Caco-2 (cell line): ENCODE measurements at regions of chr13 and their contacts with region 1.

Region 1: DNA sequence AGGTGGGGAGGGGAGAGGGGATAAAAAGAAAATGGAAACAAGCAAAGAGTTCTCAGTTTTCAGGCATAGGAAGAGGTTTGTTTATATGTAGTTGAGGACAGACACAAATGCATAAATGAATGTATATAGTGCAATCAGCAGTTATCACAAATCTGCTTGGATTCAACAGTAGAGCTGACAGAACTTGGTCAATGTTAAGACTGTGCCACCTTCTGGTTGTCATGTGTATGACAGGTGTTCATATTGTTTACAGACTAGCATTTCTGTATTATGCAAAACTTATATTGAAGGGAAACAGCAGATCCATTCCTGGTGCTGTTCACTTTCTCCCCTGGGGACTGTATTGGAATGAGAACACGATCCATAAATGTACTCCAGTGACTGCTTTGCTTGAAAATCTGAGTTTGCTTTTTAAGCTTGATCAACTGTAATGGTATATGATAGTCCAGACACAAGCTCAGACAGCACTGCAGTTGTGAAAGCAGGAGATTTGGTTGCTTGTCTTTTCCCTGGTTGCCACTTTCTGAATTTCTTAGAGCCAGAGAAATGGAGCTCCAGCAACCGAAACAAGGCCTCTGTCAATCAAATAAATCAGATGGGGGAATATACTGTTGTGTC is 319.5 kb upstream of the OBI1 start:
- DNase-seq: peak; percentile 47 to 65
- H3K4me3 ChIP-seq: no peak overlapping the region
- H3K4me3 Mint-ChIP-seq: no peak overlapping the region
- H3K27ac Mint-ChIP-seq: no peak overlapping the region
- H3K4me1 ChIP-seq: no peaks in the 10 kb centered on the region
- H3K4me1 Mint-ChIP-seq: no peaks in the 10 kb centered on the region
- H3K27me3 ChIP-seq: no peaks in the 10 kb centered on the region
- H3K27me3 Mint-ChIP-seq: peaks cover 5% of the 10 kb centered on the region
- CTCF ChIP-seq: peak; percentile 74 to 77

Region 2: DNA sequence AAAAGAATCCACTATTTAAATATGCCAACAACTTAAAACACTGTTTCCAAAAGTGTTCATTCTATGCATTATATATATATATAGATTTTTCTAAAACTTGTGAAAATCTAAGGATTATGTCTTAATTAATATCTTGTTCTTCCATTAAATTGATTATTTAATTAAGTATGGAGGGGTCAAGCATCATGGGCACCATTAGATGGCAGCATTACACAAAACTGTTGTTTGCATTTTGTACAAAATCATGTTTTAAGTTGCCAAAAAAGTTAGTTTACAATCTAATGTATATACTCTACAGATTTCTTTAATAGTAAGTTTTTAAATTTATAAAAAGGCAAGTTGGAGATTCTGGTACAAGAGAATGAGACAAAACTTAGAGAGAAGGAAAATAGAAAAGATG is 846.7 kb before region 1 on chr13:
- CTCF ChIA-PET with region 1: interaction called, 17 read pairs
- POLR2A ChIA-PET with region 1: no interaction called
- intact Hi-C with region 1: loop called (anchors 1 kb)
- DNase-seq: no peak
- H3K4me3 ChIP-seq: no peak overlapping the region
- H3K4me3 Mint-ChIP-seq: no peak overlapping the region
- H3K27ac Mint-ChIP-seq: no peak overlapping the region
- H3K4me1 ChIP-seq: no peaks in the 10 kb centered on the region
- H3K4me1 Mint-ChIP-seq: no peaks in the 10 kb centered on the region
- H3K27me3 ChIP-seq: no peaks in the 10 kb centered on the region
- H3K27me3 Mint-ChIP-seq: peaks cover 12% of the 10 kb centered on the region
- CTCF ChIP-seq: peak; percentile 15 to 27

Region 3: GRCh38 chr13:78241278-78241919 is 737.1 kb before region 1 on chr13:
- CTCF ChIA-PET with region 1: interaction called, 9 read pairs
- POLR2A ChIA-PET with region 1: no interaction called
- intact Hi-C with region 1: loop called (anchors 1 kb)
- DNase-seq: peak; percentile 41 to 56
- H3K4me3 ChIP-seq: no peak overlapping the region
- H3K4me3 Mint-ChIP-seq: no peak overlapping the region
- H3K27ac Mint-ChIP-seq: no peak overlapping the region
- H3K4me1 ChIP-seq: no peaks in the 10 kb centered on the region
- H3K4me1 Mint-ChIP-seq: peaks cover 7% of the 10 kb centered on the region
- H3K27me3 ChIP-seq: no peaks in the 10 kb centered on the region
- H3K27me3 Mint-ChIP-seq: peaks cover 3% of the 10 kb centered on the region
- CTCF ChIP-seq: peak; percentile 80 to 86

Region 4: GRCh38 chr13:78317030-78317429 is 661.5 kb before region 1 on chr13:
- CTCF ChIA-PET with region 1: no interaction called
- POLR2A ChIA-PET with region 1: no interaction called
- intact Hi-C with region 1: loop called (anchors 1 kb)
- DNase-seq: peak in 1 of 2 experiments; percentile 6
- H3K4me3 ChIP-seq: no peak overlapping the region
- H3K4me3 Mint-ChIP-seq: no peak overlapping the region
- H3K27ac Mint-ChIP-seq: no peak overlapping the region
- H3K4me1 ChIP-seq: no peaks in the 10 kb centered on the region
- H3K4me1 Mint-ChIP-seq: no peaks in the 10 kb centered on the region
- H3K27me3 ChIP-seq: no peaks in the 10 kb centered on the region
- H3K27me3 Mint-ChIP-seq: peaks cover 6% of the 10 kb centered on the region
- CTCF ChIP-seq: peak; percentile 23 to 55

Region 5: GRCh38 chr13:78603240-78603957 is 375.1 kb before region 1 on chr13 and contains the start of gene POU4F1:
- CTCF ChIA-PET with region 1: interaction called, 4 read pairs
- POLR2A ChIA-PET with region 1: no interaction called
- intact Hi-C with region 1: loop called (anchors 2 kb)
- DNase-seq: peak; percentile 91 to 96
- H3K4me3 ChIP-seq: peak within 1 kb of the TSS; percentile 78
- H3K4me3 Mint-ChIP-seq: peak within 1 kb of the TSS; percentile 78
- H3K27ac Mint-ChIP-seq: peak within 1 kb of the TSS; percentile 35
- H3K4me1 ChIP-seq: peaks cover 7% of the 10 kb centered on the region; the same call in 1 of the 2 replicates
- H3K4me1 Mint-ChIP-seq: no peaks in the 10 kb centered on the region
- H3K27me3 ChIP-seq: no peaks in the 10 kb centered on the region
- H3K27me3 Mint-ChIP-seq: peaks cover 3% of the 10 kb centered on the region
- CTCF ChIP-seq: no peak
- total RNA-seq, gene POU4F1: 7.3 and 8.1 TPM in 2 replicates

Region 6: GRCh38 chr13:78736142-78736541 is 242.3 kb before region 1 on chr13:
- CTCF ChIA-PET with region 1: no interaction called
- POLR2A ChIA-PET with region 1: no interaction called
- intact Hi-C with region 1: no loop called
- DNase-seq: no peak
- H3K4me3 ChIP-seq: no peak overlapping the region
- H3K4me3 Mint-ChIP-seq: no peak overlapping the region
- H3K27ac Mint-ChIP-seq: no peak overlapping the region
- H3K4me1 ChIP-seq: no peaks in the 10 kb centered on the region
- H3K4me1 Mint-ChIP-seq: no peaks in the 10 kb centered on the region
- H3K27me3 ChIP-seq: no peaks in the 10 kb centered on the region; the same call in 1 of the 2 replicates
- H3K27me3 Mint-ChIP-seq: peaks cover 9% of the 10 kb centered on the region
- CTCF ChIP-seq: no peak

Region 7: DNA sequence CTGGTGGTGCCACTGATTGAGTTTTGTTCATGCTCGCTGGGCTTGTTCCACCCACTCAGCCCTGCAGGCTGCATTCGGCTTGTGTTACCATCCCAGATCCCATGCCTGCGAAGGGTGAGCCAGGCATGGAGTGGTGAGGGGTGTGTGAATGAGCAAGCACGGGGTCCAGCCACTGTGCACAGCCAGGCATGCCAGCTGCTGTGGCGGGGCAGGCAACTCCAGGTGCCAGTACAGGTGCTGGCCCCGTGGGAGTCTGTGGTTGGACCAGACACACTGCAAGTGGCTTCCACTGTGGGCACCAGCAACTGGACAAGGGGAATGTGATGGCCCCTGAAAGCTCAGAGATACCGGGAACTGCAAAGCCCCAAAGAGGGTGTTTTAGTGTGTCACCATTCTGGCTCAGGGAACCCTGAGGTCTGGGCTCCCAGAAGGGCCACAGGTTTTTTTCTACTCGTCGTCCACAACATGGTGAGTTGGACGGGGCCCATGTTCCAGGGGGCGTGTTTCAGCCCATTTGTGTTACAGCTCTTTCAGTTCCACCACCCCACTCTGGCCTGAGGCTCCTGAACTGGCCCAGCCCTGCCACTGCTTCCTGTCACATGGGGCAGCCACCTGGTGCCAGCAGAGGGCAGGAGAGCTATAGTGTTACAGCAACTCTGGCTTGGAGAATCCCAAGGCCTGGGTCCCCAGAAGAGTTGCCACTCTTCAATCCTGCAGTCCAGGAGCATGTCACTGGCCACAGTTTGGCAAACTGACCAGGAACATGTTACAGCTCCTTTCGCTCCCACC is 102.5 kb before region 1 on chr13:
- CTCF ChIA-PET with region 1: interaction called, 4 read pairs
- POLR2A ChIA-PET with region 1: no interaction called
- intact Hi-C with region 1: loop called (anchors 1 kb)
- DNase-seq: peak; percentile 18 to 36
- H3K4me3 ChIP-seq: no peak overlapping the region
- H3K4me3 Mint-ChIP-seq: no peak overlapping the region
- H3K27ac Mint-ChIP-seq: no peak overlapping the region
- H3K4me1 ChIP-seq: no peaks in the 10 kb centered on the region
- H3K4me1 Mint-ChIP-seq: no peaks in the 10 kb centered on the region
- H3K27me3 ChIP-seq: no peaks in the 10 kb centered on the region
- H3K27me3 Mint-ChIP-seq: peaks cover 7% of the 10 kb centered on the region
- CTCF ChIP-seq: peak in 1 of 2 experiments; percentile 11